IMR-90 (cell line): ENCODE measurements at regions of chr9 and their contacts with region 1.

Region 1: GRCh38 chr9:71955300-71955915 is 44.0 kb downstream of the C9orf85 start:
- DNase-seq: no peak
- ATAC-seq: no peak
- H3K4me3 ChIP-seq: no peak overlapping the region
- H3K27ac ChIP-seq: no peak overlapping the region
- H3K4me1 ChIP-seq: no peaks in the 10 kb centered on the region
- H3K27me3 ChIP-seq: no peaks in the 10 kb centered on the region
- CTCF ChIP-seq: no peak
- POLR2A ChIP-seq: no peak
- RAD21 ChIP-seq: no peak

Region 2: DNA sequence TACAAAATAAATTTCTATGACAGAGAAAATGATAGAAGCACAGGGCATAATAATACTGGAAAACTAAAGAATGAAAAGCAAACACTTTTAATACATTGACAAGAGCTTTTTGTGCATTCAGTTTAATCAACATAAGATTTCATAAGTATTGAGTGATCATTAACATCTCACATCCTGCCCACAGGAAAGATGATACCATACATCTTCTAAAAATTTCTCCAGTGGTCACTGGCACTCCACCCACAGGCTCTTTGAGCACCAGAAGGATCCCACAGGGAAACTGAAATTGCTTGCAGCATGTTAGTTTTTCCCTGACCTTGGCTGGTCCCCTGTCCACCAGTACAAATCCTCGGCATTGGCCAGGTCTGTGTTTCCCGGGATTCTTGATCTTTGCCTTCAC is 373.1 kb before region 1 on chr9:
- CTCF ChIA-PET with region 1: no interaction called
- POLR2A ChIA-PET with region 1: no interaction called
- dilution Hi-C with region 1: no loop called
- in situ Hi-C with region 1: no loop called
- intact Hi-C with region 1: no loop called
- DNase-seq: no peak
- ATAC-seq: no peak
- H3K4me3 ChIP-seq: no peak overlapping the region
- H3K27ac ChIP-seq: no peak overlapping the region
- H3K4me1 ChIP-seq: no peaks in the 10 kb centered on the region
- H3K27me3 ChIP-seq: peaks cover 1% of the 10 kb centered on the region; the same call in 1 of the 2 replicates
- CTCF ChIP-seq: no peak
- POLR2A ChIP-seq: no peak
- RAD21 ChIP-seq: no peak

Region 3: DNA sequence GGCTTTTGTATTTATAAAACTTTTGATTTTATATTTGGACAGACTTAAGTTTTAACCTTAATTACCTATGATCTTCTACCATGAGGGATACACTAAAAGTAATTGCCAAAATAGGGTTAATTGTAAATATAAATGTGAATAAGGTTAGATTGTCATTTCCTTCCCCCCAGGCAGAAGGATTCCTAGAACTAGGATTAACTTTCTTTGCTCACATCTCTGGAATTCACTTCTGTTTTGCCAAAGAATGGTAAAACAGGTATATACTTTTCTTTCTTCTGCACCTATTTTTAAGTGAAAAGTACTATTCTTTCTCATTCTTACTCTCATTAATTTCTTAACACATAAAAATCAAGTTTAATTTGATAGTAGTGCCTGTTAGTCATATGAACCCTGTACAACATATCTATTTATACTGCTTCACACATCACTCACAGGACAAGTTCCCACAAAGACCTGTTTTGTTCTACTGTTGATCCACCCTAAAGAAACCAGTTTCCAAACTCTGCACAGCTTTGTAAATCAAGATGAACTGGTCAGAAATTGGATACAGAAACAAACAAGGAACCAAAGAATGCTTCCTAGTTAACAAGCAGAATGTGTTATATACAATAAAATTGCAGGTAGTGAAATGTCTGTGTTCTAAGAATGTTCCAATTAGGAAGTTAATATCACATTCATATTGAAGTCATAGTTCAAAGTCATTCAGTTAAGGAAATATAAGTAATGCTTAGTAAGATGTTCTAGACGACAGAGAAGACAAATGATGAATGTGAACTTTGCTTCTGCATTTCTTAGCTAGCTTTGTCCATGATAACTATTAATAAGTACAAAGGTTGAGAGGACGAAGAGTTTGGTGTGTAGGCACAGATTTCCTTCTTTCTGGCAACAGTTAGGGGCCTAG is 10.7 kb before region 1 on chr9:
- CTCF ChIA-PET with region 1: no interaction called
- POLR2A ChIA-PET with region 1: no interaction called
- dilution Hi-C with region 1: no loop called
- in situ Hi-C with region 1: no loop called
- intact Hi-C with region 1: no loop called
- DNase-seq: no peak
- ATAC-seq: no peak
- H3K4me3 ChIP-seq: no peak overlapping the region
- H3K27ac ChIP-seq: no peak overlapping the region
- H3K4me1 ChIP-seq: peaks cover 5% of the 10 kb centered on the region; the same call in 1 of the 2 replicates
- H3K27me3 ChIP-seq: no peaks in the 10 kb centered on the region
- CTCF ChIP-seq: no peak
- POLR2A ChIP-seq: no peak
- RAD21 ChIP-seq: no peak

Region 4: DNA sequence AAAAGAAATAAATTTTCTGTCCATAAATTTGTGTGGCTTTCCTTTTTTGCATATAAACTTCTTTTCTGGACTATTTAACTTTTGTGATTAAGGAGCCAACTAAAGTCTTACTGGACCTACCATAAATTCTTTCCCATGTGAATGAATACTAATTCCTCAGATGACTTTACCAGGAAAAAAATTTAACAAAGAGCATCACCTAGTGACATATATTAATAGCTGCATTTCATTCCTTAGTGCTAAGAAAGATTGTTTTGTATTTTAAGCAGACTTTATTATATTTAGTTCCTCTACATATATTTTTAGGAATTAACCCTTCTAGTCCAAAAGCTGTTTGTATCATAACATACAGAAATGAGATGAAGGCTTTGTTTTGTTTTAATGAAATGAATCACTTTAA is 20.4 kb after region 1 on chr9:
- CTCF ChIA-PET with region 1: no interaction called
- POLR2A ChIA-PET with region 1: no interaction called
- dilution Hi-C with region 1: no loop called
- in situ Hi-C with region 1: no loop called
- intact Hi-C with region 1: loop called (anchors 2 kb)
- DNase-seq: no peak
- ATAC-seq: no peak
- H3K4me3 ChIP-seq: no peak overlapping the region
- H3K27ac ChIP-seq: no peak overlapping the region
- H3K4me1 ChIP-seq: no peaks in the 10 kb centered on the region
- H3K27me3 ChIP-seq: no peaks in the 10 kb centered on the region
- CTCF ChIP-seq: peak; percentile 30
- POLR2A ChIP-seq: no peak
- RAD21 ChIP-seq: no peak